ENCODE measurements at regions of chr3 and their contacts with region 1.

Region 1: DNA sequence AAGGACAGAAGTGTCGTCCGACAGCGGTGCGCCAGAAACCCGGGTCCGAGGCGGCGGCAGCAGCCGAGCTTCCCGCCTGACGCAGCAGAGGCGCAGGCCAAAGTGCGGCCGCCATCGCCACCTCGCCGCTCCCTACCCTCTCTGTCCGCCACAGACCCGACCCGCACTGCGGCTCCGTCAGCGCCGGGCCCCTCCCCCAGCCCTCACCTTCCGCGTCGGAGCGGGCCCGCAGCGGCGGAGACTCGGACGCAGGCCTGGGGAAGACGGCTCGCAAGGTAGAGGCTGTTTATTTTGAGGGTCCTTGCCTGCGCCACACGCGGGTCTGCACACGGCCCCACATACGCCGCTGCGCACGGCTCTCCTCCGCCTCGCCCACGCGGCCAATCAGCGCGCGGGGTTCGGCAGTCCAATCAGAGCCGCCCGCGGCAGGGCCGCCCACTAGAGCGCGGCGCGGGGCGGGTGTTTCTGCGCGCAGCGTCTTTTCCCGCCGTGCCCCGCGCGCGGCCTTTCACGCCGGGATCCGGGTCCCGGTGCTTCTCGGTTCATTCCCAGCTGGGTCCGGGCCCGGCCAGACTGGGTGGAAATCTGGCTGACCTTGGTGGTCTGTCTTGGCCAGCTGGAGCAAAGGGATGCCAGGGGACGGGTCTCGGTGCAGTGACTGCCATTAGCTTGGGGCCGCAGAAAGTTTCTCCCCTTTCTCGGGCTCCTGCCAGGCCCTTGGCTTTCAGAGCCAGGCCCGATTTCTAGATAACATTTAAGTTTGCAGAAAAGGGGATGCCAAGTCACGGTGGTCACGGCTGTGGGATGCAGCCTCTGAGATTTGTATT is at the start of gene CNBP:
- DNase-seq: peak; percentile 96
- H3K4me3 ChIP-seq: peak within 1 kb of the TSS; percentile 83
- H3K27ac ChIP-seq: peak within 1 kb of the TSS; percentile 72
- H3K4me1 ChIP-seq: peaks cover 62% of the 10 kb centered on the region
- CTCF ChIP-seq: no peak
- total RNA-seq, gene CNBP: 336 and 350 TPM in 2 replicates

Region 2: DNA sequence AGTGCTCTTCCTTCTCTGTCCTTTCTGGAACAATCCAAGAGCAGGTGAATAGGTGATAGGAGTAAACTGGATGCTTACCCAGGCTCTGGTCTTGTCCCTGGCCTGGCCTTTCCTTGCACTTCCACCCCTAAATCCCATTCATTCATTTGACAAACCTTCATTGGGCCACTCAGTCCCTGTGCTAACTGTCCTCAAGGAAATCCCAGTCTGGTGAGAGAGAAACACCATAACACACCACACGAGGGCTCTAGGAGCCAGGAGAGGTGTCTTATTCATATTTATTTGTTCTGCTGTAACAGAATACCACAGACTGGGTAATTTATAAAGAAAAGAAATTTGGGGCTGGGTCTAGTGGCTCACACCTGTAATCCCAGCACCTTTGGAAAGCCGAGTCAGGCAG is 159.9 kb before region 1 on chr3:
- CTCF ChIA-PET with region 1: no interaction called
- POLR2A ChIA-PET with region 1: no interaction called
- intact Hi-C with region 1: no loop called
- DNase-seq: peak; percentile 58
- H3K4me3 ChIP-seq: no peak overlapping the region
- H3K27ac ChIP-seq: peak overlapping the region; percentile 20
- H3K4me1 ChIP-seq: peaks cover 38% of the 10 kb centered on the region
- CTCF ChIP-seq: peak; percentile 70

Region 3: GRCh38 chr3:129120254-129121004 is 63.4 kb before region 1 on chr3:
- CTCF ChIA-PET with region 1: interaction called, 8 read pairs
- POLR2A ChIA-PET with region 1: interaction called, 8 read pairs
- intact Hi-C with region 1: loop called (anchors 2 kb)
- DNase-seq: peak; percentile 97
- H3K4me3 ChIP-seq: peak overlapping the region; percentile 74
- H3K27ac ChIP-seq: peak overlapping the region; percentile 92
- H3K4me1 ChIP-seq: peaks cover 65% of the 10 kb centered on the region
- CTCF ChIP-seq: no peak

Region 4: GRCh38 chr3:129160891-129161859 is 22.6 kb before region 1 on chr3 and contains the start of gene ISY1:
- CTCF ChIA-PET with region 1: no interaction called
- POLR2A ChIA-PET with region 1: interaction called, 5 read pairs
- intact Hi-C with region 1: loop called (anchors 1 kb)
- DNase-seq: peak; percentile 97
- H3K4me3 ChIP-seq: peak within 1 kb of the TSS; percentile 95
- H3K27ac ChIP-seq: peak within 1 kb of the TSS; percentile 91
- H3K4me1 ChIP-seq: peaks cover 28% of the 10 kb centered on the region
- CTCF ChIP-seq: peak; percentile 94
- total RNA-seq, gene ISY1: 34.5 and 40.3 TPM in 2 replicates

Region 5: GRCh38 chr3:129211772-129212171 is 28.0 kb after region 1 on chr3:
- CTCF ChIA-PET with region 1: no interaction called
- POLR2A ChIA-PET with region 1: no interaction called
- intact Hi-C with region 1: no loop called
- DNase-seq: no peak
- H3K4me3 ChIP-seq: no peak overlapping the region
- H3K27ac ChIP-seq: no peak overlapping the region
- H3K4me1 ChIP-seq: no peaks in the 10 kb centered on the region
- CTCF ChIP-seq: no peak

Region 6: GRCh38 chr3:129224984-129225393 is 41.2 kb after region 1 on chr3:
- CTCF ChIA-PET with region 1: no interaction called
- POLR2A ChIA-PET with region 1: interaction called, 12 read pairs
- intact Hi-C with region 1: no loop called
- DNase-seq: peak; percentile 36
- H3K4me3 ChIP-seq: no peak overlapping the region
- H3K27ac ChIP-seq: no peak overlapping the region
- H3K4me1 ChIP-seq: peaks cover 35% of the 10 kb centered on the region
- CTCF ChIP-seq: no peak

Region 7: DNA sequence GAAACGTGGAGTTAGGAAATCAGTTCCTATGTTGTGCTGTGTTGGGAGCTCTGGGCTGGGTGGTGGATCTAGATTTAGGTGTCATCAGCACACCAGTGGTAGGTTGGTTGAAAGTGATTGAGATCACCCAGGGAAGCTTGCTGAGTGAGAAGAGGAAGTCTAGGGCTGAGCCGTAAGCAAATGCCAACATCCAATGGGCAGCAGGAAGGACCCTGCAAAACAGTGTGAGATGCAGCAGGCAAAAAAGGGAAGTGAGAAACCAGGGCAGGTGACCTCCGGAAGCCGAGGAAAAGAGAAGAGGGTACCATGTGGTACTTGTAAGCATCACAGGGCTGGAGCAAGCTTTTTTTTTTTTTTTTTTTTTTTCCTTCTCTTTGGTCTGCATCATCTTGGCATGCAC is 49.8 kb after region 1 on chr3:
- CTCF ChIA-PET with region 1: interaction called, 3 read pairs
- POLR2A ChIA-PET with region 1: interaction called, 5 read pairs
- intact Hi-C with region 1: loop called (anchors 1 kb)
- DNase-seq: peak; percentile 98
- H3K4me3 ChIP-seq: peak overlapping the region; percentile 45
- H3K27ac ChIP-seq: peak overlapping the region; percentile 86
- H3K4me1 ChIP-seq: peaks cover 65% of the 10 kb centered on the region
- CTCF ChIP-seq: no peak

Region 8: DNA sequence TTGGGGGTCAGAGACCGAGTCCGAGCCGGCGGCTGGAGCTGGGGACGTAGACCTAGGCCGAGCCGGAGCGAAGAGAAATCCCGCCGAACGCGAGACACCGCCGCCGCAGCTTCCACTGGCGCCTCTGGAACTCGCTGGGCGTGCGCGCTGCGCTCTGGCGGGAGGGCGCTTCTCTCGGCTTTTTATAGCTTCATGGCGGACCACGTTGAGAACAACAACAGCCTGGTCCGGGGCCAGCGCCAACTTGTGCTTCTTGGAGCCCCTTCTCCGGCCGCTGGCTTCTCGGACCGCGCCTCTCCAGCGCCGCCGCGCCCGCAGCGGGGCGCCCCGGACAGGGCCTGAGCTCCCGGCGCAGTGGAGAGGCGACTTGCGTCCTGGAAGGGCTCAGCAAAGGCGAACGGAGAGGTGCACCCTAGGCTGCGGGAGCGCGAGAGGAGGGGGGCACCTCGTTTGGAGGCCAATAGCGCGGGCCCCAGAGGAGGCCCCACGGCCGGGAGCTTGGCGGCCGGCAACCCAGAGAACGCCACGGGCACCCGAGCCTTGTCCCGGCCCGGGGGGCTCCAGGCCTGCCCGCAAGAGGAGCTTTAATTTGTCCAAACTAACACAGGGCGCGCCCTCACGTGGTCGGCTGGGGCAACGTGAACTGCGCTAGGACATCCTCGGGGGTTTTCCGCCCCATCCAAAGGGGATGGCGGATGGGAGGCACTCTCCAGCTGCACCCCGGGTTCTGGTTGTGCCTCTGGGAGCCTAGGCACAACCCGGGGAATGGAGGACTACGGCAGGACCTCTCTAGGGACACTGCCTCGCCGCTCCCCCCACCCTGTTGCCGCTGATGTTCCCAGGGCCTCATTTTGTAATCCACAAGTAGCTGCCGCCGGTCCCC is 132.6 kb after region 1 on chr3:
- CTCF ChIA-PET with region 1: interaction called, 3 read pairs
- POLR2A ChIA-PET with region 1: no interaction called
- intact Hi-C with region 1: loop called (anchors 5 kb)
- DNase-seq: peak; percentile 86
- H3K4me3 ChIP-seq: peak overlapping the region; percentile 89
- H3K27ac ChIP-seq: peak overlapping the region; percentile 73
- H3K4me1 ChIP-seq: peaks cover 40% of the 10 kb centered on the region
- CTCF ChIP-seq: peak; percentile 91

Measured in OCI-LY7 (cell line).